ENCODE measurements at regions of chr3 and their contacts with region 1.

Region 1: GRCh38 chr3:192929755-192930547 is 12.3 kb upstream of the MB21D2 start:
- DNase-seq: no peak
- ATAC-seq: peak; percentile 43
- H3K4me3 ChIP-seq: no peak overlapping the region
- H3K27ac ChIP-seq: no peak overlapping the region
- H3K4me1 ChIP-seq: peaks cover 0 to 18% of the 10 kb centered on the region in 2 donors
- H3K27me3 ChIP-seq: peaks cover 0 to 3% of the 10 kb centered on the region in 2 donors
- CTCF ChIP-seq: no peak

Region 2: DNA sequence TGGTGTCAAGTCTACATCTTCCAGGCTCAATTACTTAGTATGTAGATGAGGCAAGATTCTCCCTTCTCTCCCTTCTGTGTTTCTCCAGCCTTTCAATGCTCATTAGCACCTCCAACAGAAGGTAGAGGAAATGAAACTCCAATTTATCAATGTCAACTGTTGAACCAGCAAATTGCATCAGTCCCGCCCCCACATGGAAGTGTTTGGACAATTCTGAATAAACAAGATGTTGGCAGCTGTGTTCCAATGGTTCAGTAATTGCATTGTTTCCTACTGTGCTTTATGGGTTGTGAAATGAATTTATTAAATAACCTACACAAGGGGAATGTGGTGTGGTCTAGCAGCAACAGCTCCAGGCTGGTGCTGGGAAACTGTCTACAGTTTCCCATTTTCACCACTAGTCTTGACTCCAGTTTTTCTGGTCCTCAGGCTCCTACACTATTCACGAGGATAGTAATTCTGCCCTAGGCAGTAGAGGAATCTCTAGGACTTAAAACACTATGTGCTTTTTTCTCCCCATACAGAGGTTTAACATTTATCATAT is 104.2 kb before region 1 on chr3:
- intact Hi-C with region 1: loop called in 1 of 2 experiments (anchors 10 kb)
- DNase-seq: peak in 1 of 4 donors; percentile 41
- ATAC-seq: peak; percentile 58
- H3K4me3 ChIP-seq: no peak overlapping the region
- H3K27ac ChIP-seq: no peak overlapping the region
- H3K4me1 ChIP-seq: peaks cover 4 to 7% of the 10 kb centered on the region in 2 donors
- H3K27me3 ChIP-seq: no peaks in the 10 kb centered on the region
- CTCF ChIP-seq: no peak